ENCODE measurements at regions of chrX and their contacts with region 1.

Region 1: DNA sequence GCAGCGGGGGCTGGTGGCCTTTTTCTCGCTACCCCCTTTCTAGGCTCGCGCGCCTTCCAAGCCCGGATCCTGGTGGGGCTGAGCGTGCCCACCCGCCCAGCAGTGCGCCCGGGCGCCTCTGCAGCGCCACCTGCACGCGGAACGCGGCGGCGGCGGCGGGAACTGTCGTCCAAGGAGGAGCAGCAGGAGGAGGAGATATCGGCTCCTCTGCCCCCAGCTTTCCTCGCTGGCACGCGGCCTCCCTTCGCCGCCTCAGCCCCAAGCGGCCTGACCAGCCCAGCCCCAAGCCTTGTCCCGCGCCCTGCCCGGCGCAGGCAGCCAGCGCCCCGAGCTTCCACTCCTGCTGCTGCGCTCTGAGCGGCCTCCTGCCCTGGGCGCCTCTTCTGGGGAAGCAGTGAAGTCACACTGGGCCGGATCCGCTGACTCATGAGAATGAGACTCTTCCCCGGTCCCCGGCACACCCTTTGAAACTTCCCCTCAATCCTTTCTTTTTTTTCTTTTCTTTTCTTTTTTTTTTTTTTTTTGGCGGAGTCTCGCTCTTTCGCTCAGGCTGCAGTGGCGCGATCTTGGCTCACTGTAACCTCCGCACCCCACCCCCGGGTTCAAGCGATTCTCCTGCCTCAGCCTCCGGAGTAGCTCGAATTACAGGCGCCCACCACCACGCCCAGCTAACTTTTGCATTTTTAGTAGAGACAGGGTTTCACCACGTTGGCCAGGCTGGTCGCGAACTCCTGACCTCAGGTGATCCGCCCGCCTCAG is 10.6 kb upstream of the ELF4 start:
- DNase-seq: peak; percentile 74 to 83 (median 78)
- ATAC-seq: peak; percentile 91
- H3K4me3 ChIP-seq: peak overlapping the region; percentile 34
- H3K27ac ChIP-seq: peak overlapping the region; percentile 86
- H3K4me1 ChIP-seq: peaks cover 39 to 53% of the 10 kb centered on the region in 2 experiments; a peak in 4 of 5 replicates
- H3K27me3 ChIP-seq: no peaks in the 10 kb centered on the region
- CTCF ChIP-seq: peak; percentile 58 to 81 (median 77)
- EP300 ChIP-seq: no peak
- POLR2A ChIP-seq: peak; percentile 74
- RAD21 ChIP-seq: peak; percentile 55 to 64

Region 2: DNA sequence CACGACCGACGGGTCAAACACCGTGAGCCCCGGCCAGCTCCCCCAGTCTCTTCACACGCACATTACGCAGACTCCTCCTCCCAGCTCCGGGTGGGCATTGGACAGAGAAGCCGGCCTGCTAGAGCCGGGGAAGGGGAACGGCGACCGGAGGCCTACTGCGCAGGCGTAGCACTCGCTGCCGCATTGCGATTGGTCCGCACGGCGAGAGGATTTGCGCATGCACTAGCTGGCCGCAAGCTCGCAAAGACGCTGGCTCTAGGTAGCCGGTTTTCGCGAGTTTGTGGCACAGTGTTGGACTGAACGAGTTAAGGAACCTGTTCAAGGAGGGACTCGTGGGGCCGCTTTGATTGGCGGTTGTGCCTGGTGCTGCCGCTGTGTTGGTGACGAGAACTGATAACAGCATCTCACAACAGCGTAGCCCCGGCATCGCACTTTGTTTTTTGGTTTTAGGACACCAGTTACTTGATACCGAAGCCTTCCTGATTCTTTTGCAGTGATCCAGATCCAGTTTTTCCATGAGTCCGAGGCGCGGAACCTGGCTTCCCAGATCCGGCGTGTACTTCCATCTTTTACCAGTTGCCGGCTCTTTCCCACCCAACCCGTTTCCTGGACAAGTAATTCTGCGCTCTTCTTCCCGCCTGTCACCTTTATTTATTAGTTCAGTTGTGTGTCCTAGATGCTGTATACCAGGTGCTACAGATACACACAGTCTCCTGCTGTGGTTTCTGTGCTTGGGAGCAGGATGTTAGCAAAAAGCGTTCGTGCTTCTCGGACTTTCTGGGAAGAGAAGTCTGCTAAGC is 45.0 kb after region 1 on chrX and contains the start of gene AIFM1:
- CTCF ChIA-PET with region 1: no interaction called
- POLR2A ChIA-PET with region 1: interaction called, 3 read pairs
- in situ Hi-C with region 1: no loop called
- intact Hi-C with region 1: loop called (anchors 2 kb)
- DNase-seq: peak; percentile 91 to 96 (median 93)
- ATAC-seq: peak; percentile 92
- H3K4me3 ChIP-seq: peak within 1 kb of the TSS; percentile 68
- H3K27ac ChIP-seq: peak within 1 kb of the TSS; percentile 98
- H3K4me1 ChIP-seq: peaks cover 8 to 23% of the 10 kb centered on the region in 2 experiments; a peak in 3 of 5 replicates
- H3K27me3 ChIP-seq: no peaks in the 10 kb centered on the region
- CTCF ChIP-seq: no peak
- EP300 ChIP-seq: 0 out of 2 replicates have a peak, but pooled peaks have one; percentile 39
- POLR2A ChIP-seq: peak; percentile 93
- RAD21 ChIP-seq: peak; percentile 13 to 16; a peak in 1 of 4 replicates
- polyA plus RNA-seq, gene AIFM1: 51.0 to 62.0 TPM

Region 3: GRCh38 chrX:130190801-130191200 is 69.9 kb after region 1 on chrX:
- CTCF ChIA-PET with region 1: no interaction called
- POLR2A ChIA-PET with region 1: no interaction called
- in situ Hi-C with region 1: no loop called
- intact Hi-C with region 1: loop called (anchors 5 kb)
- DNase-seq: no peak
- ATAC-seq: no peak
- H3K4me3 ChIP-seq: no peak overlapping the region
- H3K27ac ChIP-seq: no peak overlapping the region
- H3K4me1 ChIP-seq: peaks cover 0 to 8% of the 10 kb centered on the region in 2 experiments; a peak in 2 of 5 replicates
- H3K27me3 ChIP-seq: no peaks in the 10 kb centered on the region
- CTCF ChIP-seq: no peak
- EP300 ChIP-seq: no peak
- POLR2A ChIP-seq: no peak
- RAD21 ChIP-seq: no peak